Right ventricle myocardium superior (tissue), 1 donor: ENCODE measurements at regions of chr19 and their contacts with region 1.

Region 1: DNA sequence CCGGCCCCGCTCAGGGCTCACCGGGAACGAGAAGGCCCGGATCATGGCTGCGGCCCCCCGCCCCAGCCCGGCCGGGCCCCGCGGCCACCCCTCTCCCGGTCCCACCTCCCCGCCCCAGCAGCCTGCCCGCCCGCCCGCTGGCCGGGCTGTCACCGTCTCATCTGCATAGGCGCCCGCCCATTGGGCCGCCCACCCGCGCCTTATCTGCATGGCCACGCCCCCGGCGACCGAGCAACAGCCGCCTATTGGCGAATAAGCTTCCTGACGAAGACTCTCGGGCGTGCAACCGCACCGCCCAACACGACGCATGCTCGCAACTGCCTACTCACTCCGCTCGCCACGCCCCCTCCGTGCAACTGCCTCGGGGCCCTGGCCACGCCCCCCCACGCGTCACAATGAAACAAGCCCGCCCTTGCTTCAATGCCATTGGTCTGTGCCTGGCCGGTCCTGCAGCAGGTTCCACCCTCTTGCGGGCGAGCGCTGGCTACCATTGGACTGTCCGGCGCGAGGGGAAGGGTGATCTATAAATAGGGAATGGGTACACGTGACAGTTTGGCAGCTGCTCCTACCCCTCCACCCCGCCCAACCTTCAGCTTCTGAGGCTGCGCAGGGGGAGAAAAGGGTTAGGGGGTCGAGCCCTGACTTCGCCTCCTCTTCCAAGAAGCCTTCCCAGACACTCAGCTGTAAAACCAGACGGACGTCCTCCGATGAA is at the start of gene DACT3:
- DNase-seq: peak; percentile 100
- ATAC-seq: peak; percentile 96
- total RNA-seq, gene DACT3: 15.2 TPM

Region 2: GRCh38 chr19:46529622-46530462 is 131.3 kb before region 1 on chr19:
- intact Hi-C with region 1: loop called (anchors 10 kb)
- DNase-seq: peak; percentile 82
- ATAC-seq: peak; percentile 80

Region 3: DNA sequence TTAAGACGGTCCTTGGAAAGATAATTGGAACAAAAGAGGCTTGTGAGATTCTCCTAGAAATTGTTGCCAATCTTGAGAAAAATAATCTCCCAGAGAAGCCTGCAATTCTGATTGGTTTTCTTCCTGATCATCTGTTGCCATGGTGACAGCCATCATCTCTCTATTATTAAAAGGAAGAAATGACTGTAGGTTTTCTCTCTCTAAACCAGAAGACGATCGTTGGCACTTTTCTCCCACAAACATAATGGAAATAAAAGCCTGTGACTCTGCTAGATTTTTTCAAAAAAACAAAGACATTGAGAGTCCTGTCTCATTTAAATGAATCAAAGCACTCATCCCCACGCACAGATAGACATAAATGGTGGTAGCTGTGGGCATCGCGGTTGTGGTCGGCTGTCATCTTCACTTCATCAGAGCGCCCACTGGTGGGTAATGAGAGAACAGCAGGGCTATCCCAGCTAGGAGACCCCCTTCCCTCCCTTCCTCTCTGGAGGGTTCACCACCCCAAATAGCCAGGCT is 81.8 kb before region 1 on chr19:
- intact Hi-C with region 1: no loop called
- DNase-seq: no peak
- ATAC-seq: no peak

Region 4: GRCh38 chr19:46614114-46614722 is 47.0 kb before region 1 on chr19:
- intact Hi-C with region 1: loop called (anchors 2 kb)
- DNase-seq: peak; percentile 92
- ATAC-seq: peak; percentile 80